ENCODE measurements at regions of chr6 and their contacts with region 1.

Region 1: DNA sequence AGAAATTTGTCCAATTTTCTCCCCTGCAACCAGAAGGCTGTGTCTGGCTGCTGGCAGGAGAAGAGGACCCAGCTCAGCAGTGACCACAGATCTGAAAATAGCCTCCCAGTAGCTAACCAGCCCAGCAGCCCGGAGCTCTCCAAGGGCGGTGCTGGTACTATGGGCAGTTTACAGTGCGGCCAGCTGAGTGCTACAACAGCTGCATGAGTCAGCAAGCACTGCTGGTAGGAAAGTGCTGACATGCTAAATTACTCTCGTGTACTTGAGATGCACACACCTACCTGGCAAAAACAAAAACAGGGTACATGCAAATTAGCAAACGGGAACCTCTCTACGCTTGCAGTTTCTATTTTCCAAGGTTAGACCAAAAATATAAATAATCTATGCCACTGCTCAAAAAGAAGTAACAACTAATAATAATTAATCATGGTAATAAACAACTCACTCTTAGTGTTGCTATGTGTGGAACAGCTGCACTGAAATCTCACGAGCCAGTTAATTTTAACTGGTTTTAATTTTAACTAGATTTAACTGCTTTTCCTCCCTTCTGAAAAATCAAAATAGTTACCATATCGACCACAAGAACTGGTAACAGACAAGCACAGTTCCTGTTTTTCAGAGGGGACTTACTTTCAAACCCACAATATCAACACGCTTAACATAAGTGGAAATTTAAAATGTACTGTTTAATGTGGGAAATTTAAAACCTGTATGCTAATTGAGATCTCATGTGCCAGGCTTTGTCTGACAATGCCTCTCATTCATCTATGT is 10.8 kb downstream of the BACH2 start:
- DNase-seq: peak; percentile 75
- ATAC-seq: peak; percentile 40
- H3K4me3 Mint-ChIP-seq: peak overlapping the region; percentile 62
- H3K27ac Mint-ChIP-seq: peak overlapping the region; percentile 95
- H3K4me1 Mint-ChIP-seq: peaks cover 93% of the 10 kb centered on the region
- H3K27me3 Mint-ChIP-seq: no peaks in the 10 kb centered on the region

Region 2: DNA sequence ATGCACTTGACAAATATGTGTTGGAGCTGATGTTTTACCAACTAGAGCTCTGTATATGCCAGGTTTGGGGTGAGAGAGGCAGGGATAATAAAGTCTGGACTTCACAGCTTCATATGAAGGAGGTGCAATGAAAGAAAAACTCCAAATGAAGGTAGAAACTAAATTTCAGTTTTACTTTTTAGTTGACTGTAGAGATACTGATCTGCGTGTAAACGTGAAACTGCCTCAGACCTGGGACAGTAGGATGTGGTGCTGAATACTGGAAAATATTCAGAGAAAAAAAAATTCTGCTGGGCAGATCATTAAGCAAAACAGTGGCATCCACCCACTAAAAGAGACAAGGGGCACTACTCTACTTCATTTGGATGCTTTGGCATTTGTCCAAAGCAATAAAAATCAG is 83.6 kb before region 1 on chr6:
- CTCF ChIA-PET with region 1: interaction called, 3 read pairs
- POLR2A ChIA-PET with region 1: interaction called, 11 read pairs
- intact Hi-C with region 1: no loop called
- DNase-seq: peak; percentile 53
- ATAC-seq: peak; percentile 75
- H3K4me3 Mint-ChIP-seq: peak overlapping the region; percentile 11
- H3K27ac Mint-ChIP-seq: peak overlapping the region; percentile 87
- H3K4me1 Mint-ChIP-seq: peaks cover 86% of the 10 kb centered on the region
- H3K27me3 Mint-ChIP-seq: no peaks in the 10 kb centered on the region

Region 3: GRCh38 chr6:90256698-90257485 is 28.9 kb before region 1 on chr6:
- CTCF ChIA-PET with region 1: interaction called, 9 read pairs
- POLR2A ChIA-PET with region 1: interaction called, 9 read pairs
- intact Hi-C with region 1: loop called (anchors 1 kb)
- DNase-seq: peak; percentile 51
- ATAC-seq: peak; percentile 87
- H3K4me3 Mint-ChIP-seq: no peak overlapping the region
- H3K27ac Mint-ChIP-seq: peak overlapping the region; percentile 85
- H3K4me1 Mint-ChIP-seq: peaks cover 92% of the 10 kb centered on the region
- H3K27me3 Mint-ChIP-seq: no peaks in the 10 kb centered on the region

Region 4: DNA sequence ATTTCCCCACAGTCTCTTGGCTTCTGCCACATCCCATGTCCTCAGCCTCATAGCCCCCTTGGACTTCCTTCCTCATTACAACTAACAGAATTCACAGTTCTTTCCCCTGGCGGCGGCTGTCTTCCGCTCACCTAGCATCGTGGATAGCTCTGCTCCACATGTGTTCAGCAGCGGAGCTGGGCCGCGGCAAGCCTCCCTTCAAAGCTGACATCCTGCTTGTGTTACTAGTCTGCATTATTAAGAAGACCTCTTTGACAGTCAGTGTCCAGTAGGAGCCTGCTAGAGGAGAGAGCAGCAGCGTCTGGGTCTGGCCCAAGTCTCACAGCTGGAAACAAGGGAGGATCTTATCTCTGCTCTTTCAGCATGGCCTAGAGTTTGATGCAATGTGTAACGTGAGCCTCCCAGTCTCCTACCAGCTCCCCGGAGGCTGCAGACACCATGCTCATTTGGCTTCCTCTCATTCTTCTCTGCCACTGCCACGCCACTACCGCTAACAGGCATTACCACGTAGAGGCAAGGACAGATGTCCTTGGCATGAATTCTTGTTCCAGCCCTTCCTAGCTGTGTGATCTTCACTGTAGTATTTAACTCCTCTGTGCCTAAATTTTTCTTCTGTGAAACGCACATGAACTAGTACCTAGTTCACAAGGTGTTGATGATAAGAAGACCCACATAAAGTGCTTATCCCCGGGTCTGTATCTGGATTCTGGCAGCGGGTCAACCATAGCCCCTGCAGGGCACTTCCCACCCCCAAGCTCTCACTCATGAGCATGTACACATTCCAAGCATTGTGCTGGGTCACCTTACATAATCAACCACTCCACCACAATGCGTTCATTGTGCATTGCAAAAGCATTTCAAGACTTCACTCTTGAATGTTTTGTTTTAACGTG is 117.9 kb after region 1 on chr6:
- CTCF ChIA-PET with region 1: interaction called, 63 read pairs
- POLR2A ChIA-PET with region 1: interaction called, 6 read pairs
- intact Hi-C with region 1: loop called (anchors 1 to 2 kb)
- DNase-seq: no peak
- ATAC-seq: no peak
- H3K4me3 Mint-ChIP-seq: peak overlapping the region; percentile 20
- H3K27ac Mint-ChIP-seq: peak overlapping the region; percentile 69
- H3K4me1 Mint-ChIP-seq: peaks cover 81% of the 10 kb centered on the region
- H3K27me3 Mint-ChIP-seq: no peaks in the 10 kb centered on the region

Region 5: DNA sequence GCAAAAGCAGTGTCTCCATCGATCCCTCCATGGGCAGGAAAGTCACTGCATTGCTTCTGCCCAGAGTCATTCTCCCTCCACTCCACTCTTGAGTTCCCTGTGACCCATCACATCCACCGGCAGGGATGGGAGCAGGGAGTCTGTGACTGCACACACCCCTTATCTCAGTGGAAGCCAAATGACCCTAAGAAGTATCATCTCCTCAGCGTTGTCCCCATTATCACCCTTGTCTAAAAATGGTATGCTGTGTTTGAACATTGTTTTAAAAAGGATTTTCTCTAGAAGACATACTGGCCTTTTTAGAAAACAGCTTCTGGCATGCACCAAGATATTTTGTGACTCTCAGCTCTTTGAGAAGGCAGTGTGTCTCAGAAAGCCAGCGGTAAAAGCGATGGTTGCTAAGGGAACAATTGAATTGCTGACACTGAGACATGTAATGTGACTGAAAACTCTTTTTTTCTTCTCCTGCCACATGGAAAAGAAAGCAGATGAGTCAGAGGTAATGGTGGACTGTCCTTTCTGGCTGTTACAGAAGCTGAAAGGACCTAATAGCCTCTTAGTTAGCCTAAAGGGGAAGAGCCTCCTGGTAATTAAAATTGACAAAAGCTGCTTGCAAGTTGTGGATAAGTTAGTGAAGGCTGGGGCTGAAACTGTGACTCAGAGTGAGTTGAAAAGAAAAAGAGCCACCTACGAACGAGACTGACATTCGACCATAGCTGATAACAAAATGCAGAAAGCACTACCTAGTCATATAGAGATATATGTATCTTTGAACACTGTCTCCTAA is 180.6 kb after region 1 on chr6:
- CTCF ChIA-PET with region 1: interaction called, 12 read pairs
- POLR2A ChIA-PET with region 1: interaction called, 10 read pairs
- intact Hi-C with region 1: no loop called
- DNase-seq: peak; percentile 68
- ATAC-seq: peak; percentile 74
- H3K4me3 Mint-ChIP-seq: peak overlapping the region; percentile 48
- H3K27ac Mint-ChIP-seq: peak overlapping the region; percentile 93
- H3K4me1 Mint-ChIP-seq: peaks cover 97% of the 10 kb centered on the region
- H3K27me3 Mint-ChIP-seq: peaks cover 2% of the 10 kb centered on the region